HCT116 (cell line): ENCODE measurements at regions of chr19 and their contacts with region 1.

Region 1: GRCh38 chr19:51097166-51097738 is 11.0 kb downstream of the CTU1 start:
- DNase-seq: peak; percentile 31
- ATAC-seq: peak; percentile 87
- H3K4me3 ChIP-seq: no peak overlapping the region
- H3K27ac ChIP-seq: no peak overlapping the region
- H3K4me1 ChIP-seq: peaks cover under 1 to 6% of the 10 kb centered on the region in 2 experiments; a peak in 2 of 4 replicates
- H3K27me3 ChIP-seq: no peaks in the 10 kb centered on the region
- CTCF ChIP-seq: peak; percentile 36 to 78 (median 65); a peak in 5 of 6 replicates
- POLR2A ChIP-seq: no peak
- RAD21 ChIP-seq: peak; percentile 60

Region 2: GRCh38 chr19:50705422-50706019 is 391.7 kb before region 1 on chr19:
- CTCF ChIA-PET with region 1: interaction called, 15 read pairs
- POLR2A ChIA-PET with region 1: no interaction called
- RAD21 ChIA-PET with region 1: no interaction called
- intact Hi-C with region 1: loop called (anchors 2 kb)
- DNase-seq: peak; percentile 56
- ATAC-seq: peak; percentile 87
- H3K4me3 ChIP-seq: no peak overlapping the region
- H3K27ac ChIP-seq: no peak overlapping the region
- H3K4me1 ChIP-seq: peaks cover 0 to 2% of the 10 kb centered on the region in 2 experiments; a peak in 2 of 4 replicates
- H3K27me3 ChIP-seq: no peaks in the 10 kb centered on the region; the same call in 1 of the 2 replicates
- CTCF ChIP-seq: peak; percentile 79 to 92 (median 85)
- POLR2A ChIP-seq: no peak
- RAD21 ChIP-seq: peak; percentile 87

Region 3: DNA sequence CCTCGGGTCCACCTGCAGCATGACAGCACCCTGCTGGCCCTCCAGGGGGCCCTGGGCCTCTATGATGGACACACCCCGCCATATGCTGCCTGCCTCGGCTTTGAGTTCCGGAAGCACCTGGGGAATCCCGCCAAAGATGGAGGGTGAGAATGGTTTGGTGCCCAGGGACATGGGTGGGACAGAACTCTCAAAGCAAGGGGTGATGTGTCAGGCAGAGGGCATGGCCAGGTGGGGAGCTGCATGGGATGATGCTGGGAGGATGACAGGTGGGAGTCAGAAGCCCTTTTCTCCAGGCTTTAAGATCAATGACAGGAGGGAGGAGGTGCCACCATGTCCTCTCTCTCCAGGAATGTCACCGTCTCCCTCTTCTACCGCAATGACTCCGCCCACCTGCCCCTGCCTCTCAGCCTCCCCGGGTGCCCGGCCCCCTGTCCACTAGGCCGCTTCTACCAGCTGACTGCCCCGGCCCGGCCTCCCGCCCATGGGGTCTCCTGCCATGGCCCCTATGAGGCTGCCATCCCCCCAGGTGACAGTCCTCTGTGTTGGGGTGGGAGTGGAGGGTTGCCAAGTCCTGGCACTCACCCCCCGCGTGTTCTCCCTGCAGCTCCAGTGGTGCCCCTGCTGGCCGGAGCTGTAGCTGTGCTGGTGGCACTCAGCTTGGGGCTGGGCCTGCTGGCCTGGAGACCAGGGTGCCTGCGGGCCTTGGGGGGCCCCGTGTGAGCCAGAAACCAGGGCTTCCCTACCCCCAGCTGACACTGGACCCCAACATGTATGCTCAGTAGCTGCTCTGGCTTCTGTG is 302.6 kb before region 1 on chr19:
- CTCF ChIA-PET with region 1: interaction called, 3 read pairs
- POLR2A ChIA-PET with region 1: no interaction called
- RAD21 ChIA-PET with region 1: no interaction called
- intact Hi-C with region 1: loop called (anchors 5 kb)
- DNase-seq: no peak
- ATAC-seq: peak; percentile 61
- H3K4me3 ChIP-seq: no peak overlapping the region
- H3K27ac ChIP-seq: peak overlapping the region; percentile 40
- H3K4me1 ChIP-seq: peaks cover 11 to 32% of the 10 kb centered on the region in 2 experiments; a peak in 3 of 4 replicates
- H3K27me3 ChIP-seq: no peaks in the 10 kb centered on the region
- CTCF ChIP-seq: peak in 2 of 3 experiments; percentile 64 to 78; a peak in 4 of 6 replicates
- POLR2A ChIP-seq: peak; percentile 54
- RAD21 ChIP-seq: peak; percentile 46; the same call in 1 of the 2 replicates

Region 4: DNA sequence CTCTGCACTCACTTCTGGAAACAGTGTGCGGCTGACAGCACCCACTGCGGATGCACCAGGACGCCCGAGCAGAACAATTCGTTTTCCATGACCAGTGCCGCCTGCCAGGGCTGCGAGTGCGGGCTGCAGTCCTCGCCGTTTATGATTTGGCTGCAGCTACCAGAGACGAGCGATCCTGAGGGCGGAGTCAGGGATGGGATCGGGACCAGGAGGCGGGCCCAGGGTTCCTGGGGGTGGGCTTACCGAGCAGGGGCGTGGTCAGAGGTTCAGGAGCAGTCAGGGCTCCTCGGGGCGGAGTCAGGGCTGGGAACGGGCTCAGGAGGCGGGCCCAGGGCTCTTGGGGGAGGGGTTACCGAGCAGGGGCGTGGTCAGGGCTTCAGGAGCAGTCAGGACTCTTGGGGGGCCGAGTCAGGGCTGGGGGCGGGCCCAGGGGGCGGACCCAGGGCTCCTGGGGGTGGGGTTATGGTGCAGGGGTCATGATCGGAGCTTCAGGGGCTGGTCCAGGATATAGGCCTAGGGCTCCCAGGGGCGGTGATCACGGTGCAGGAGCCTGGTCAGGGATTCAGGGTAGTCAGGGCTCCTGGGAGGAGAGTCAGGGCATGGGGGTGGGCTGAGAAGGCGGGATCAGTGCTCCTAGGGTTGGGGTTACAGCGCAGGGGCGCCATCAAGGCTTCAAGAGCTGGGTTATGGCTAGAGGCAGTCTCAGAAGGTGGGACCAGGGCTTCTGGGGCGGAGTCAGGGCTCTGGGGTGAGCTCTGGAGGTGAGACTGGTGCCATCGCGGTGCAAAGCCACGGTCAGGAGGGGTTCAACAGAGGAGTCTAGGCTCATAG is 187.8 kb before region 1 on chr19:
- CTCF ChIA-PET with region 1: interaction called, 4 read pairs
- POLR2A ChIA-PET with region 1: no interaction called
- RAD21 ChIA-PET with region 1: no interaction called
- intact Hi-C with region 1: loop called (anchors 5 kb)
- DNase-seq: peak; percentile 85
- ATAC-seq: peak; percentile 97
- H3K4me3 ChIP-seq: peak overlapping the region; percentile 27 to 55
- H3K27ac ChIP-seq: no peak overlapping the region
- H3K4me1 ChIP-seq: peaks cover 4 to 26% of the 10 kb centered on the region in 2 experiments; a peak in 3 of 4 replicates
- H3K27me3 ChIP-seq: peaks cover 9% of the 10 kb centered on the region
- CTCF ChIP-seq: no peak
- POLR2A ChIP-seq: no peak
- RAD21 ChIP-seq: no peak

Region 5: GRCh38 chr19:50933640-50934039 is 163.6 kb before region 1 on chr19:
- CTCF ChIA-PET with region 1: interaction called, 11 read pairs
- POLR2A ChIA-PET with region 1: no interaction called
- RAD21 ChIA-PET with region 1: no interaction called
- intact Hi-C with region 1: loop called (anchors 2 kb)
- DNase-seq: no peak
- ATAC-seq: no peak
- H3K4me3 ChIP-seq: peak overlapping the region in 1 of 2 experiments; percentile 1; a peak in 1 of 4 replicates
- H3K27ac ChIP-seq: peak overlapping the region; percentile 78
- H3K4me1 ChIP-seq: peaks cover 47 to 54% of the 10 kb centered on the region in 2 experiments
- H3K27me3 ChIP-seq: no peaks in the 10 kb centered on the region
- CTCF ChIP-seq: no peak
- POLR2A ChIP-seq: no peak
- RAD21 ChIP-seq: 0 out of 2 replicates have a peak, but pooled peaks have one; percentile 5